Tibial artery (tissue), 4 donors: ENCODE measurements at regions of chr1 and their contacts with region 1.

Region 1: DNA sequence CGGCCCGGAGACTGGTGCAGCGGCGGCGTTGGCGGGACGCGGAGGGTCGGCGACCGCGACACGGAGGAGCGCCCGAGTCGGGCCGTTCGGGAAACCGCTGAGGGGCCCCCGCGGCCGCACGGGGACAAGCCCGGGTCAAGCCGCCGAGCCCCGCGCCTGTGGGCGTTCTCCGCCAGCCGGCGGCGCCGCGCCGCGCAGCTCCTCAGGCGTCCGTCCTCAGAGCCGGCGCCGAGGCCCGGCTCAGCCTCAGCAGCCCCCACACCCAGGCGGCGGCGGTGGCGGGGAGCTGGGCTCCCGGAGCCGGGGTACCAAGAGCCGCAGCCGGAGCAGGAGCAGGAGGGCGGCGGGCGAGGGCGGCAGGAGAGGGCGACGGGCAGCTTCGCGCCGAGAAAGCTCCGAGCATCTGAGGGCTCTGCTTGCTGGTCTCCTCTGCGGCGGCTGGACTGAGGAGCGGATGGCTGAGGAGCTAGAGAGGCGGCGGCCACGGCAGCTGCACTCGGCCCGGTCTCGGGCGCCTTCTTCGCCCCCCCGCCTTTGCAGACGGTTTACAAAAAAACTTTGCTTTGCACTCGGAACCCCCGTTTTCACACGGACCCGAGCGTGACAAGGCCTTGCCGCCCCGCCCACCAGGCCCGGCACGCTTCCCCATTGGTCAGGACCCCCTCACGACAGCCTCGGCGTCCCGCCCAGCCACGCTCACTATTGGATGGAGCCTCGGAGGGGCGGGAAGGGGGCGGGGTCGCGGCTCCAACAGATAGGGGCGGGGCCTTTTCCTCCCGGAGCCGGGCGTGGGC is at the start of gene SLC30A1:
- DNase-seq: peak; percentile 100
- H3K4me3 ChIP-seq: peak within 1 kb of the TSS; percentile 89 to 99
- H3K27ac ChIP-seq: peak within 1 kb of the TSS; percentile 93 to 97
- H3K4me1 ChIP-seq: peaks cover 0 to 66% (median 34%) of the 10 kb centered on the region in 4 donors
- H3K27me3 ChIP-seq: no peaks in the 10 kb centered on the region
- CTCF ChIP-seq: no peak

Region 2: DNA sequence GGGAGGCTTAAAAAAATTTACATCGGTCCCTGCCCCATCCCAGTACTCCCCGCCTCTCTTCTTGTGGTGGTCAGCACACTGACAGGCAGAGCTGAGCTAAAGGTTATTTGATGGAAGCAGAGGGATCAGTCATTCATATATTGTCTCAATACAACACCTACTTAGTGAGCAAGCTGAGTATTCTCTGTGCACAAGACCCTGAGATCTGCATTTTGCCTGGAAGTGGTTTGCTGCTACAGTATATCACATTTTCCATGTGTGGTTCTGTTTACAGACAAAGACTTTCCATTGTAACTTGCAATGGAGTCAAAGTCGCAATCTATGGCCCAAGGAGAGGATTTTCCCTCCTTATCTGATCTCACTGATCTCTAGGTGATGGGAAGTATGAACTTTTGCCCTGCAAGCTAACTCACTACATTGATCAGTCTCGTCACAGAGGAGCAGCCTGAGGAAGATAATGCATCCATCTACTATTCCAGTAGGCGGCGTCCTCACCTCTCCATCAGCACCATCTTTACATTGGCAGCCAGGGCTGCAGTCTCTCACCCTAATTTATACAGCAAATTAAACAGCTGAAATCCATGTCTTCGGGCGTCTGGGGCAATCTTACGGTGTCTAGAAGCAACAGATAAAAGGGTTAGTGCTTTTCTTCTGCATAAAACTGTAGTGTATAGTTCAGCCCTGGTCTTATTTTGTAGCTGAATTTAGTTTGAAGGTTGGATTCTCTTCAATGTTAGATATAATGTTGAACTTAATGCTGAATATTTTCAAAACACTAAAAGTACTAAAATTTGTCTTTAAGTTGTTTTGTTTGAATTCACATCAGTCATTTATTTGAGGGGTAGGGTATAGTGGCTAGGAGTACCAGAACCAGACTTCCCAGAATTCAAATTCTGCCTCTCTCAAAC is 255.4 kb before region 1 on chr1:
- intact Hi-C with region 1: loop called (anchors 10 kb)
- DNase-seq: peak in 1 of 2 donors; percentile 57
- H3K4me3 ChIP-seq: no peak overlapping the region
- H3K27ac ChIP-seq: no peak overlapping the region
- H3K4me1 ChIP-seq: peaks cover 0 to 19% (median 8%) of the 10 kb centered on the region in 4 donors
- H3K27me3 ChIP-seq: no peaks in the 10 kb centered on the region
- CTCF ChIP-seq: peak; percentile 64 to 67

Region 3: GRCh38 chr1:211514030-211514754 is 64.6 kb before region 1 on chr1:
- intact Hi-C with region 1: loop called (anchors 5 kb)
- DNase-seq: peak; percentile 80 to 88
- H3K4me3 ChIP-seq: no peak overlapping the region
- H3K27ac ChIP-seq: peak overlapping the region in 1 of 2 donors; percentile 36
- H3K4me1 ChIP-seq: peaks cover 0 to 16% (median 9%) of the 10 kb centered on the region in 4 donors
- H3K27me3 ChIP-seq: no peaks in the 10 kb centered on the region
- CTCF ChIP-seq: peak; percentile 72 to 76

Region 4: GRCh38 chr1:211613093-211613947 is 34.5 kb after region 1 on chr1:
- intact Hi-C with region 1: loop called (anchors 5 kb)
- DNase-seq: peak; percentile 97
- H3K4me3 ChIP-seq: no peak overlapping the region
- H3K27ac ChIP-seq: peak overlapping the region; percentile 66 to 69
- H3K4me1 ChIP-seq: peaks cover 0 to 54% (median 35%) of the 10 kb centered on the region in 4 donors
- H3K27me3 ChIP-seq: no peaks in the 10 kb centered on the region
- CTCF ChIP-seq: no peak

Region 5: DNA sequence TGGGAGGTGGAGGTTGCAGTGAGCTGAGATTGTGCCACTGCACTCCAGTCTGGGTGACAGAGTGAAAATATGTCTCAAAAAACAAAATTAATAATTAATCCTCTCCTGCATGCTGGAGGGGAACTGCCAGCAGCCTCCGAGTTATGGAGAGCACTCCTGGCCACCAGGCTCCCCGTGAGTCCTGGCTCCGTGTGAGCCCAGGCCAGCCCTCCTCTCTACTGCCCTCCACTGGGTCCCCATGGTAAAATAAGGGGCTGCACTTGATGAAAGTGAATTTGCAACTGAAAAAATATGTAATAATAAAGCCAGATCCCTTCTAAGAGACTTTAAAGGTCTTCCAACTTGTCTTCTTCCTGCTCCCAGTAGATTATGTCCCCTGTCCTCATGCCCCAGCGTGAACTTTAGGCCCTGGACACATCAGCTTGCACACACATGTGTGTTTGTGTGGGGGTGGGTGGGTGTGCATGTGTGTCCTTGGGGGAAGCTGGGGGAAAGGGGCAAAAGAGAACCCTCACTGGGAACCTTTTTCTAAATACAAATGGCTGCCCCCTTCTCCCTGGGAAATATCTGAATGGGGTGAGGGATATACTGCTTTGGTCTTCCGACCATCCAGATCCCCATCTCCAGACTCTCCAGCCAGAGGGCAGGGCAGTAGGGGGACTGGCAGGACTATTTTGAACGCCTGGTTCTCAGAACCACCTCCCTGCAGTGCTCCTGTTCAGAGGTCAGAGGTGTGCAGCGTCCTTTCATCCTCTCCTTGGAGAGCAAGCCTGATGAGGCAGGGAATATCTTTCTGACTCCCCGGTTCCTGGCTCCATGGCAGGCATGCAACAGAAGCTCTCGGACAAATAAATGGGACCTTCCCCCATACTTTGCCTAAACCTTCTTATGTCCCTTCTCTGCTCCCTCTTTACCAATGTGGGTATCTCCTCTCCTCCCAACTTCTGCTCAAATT is 70.4 kb after region 1 on chr1:
- intact Hi-C with region 1: loop called (anchors 2 kb)
- DNase-seq: peak in 1 of 2 donors; percentile 49
- H3K4me3 ChIP-seq: no peak overlapping the region
- H3K27ac ChIP-seq: no peak overlapping the region
- H3K4me1 ChIP-seq: peaks cover 0 to 4% (median under 1%) of the 10 kb centered on the region in 4 donors
- H3K27me3 ChIP-seq: no peaks in the 10 kb centered on the region
- CTCF ChIP-seq: peak; percentile 74 to 87